HEK293T (cell line): ENCODE measurements at regions of chr2 and their contacts with region 1.

Region 1: DNA sequence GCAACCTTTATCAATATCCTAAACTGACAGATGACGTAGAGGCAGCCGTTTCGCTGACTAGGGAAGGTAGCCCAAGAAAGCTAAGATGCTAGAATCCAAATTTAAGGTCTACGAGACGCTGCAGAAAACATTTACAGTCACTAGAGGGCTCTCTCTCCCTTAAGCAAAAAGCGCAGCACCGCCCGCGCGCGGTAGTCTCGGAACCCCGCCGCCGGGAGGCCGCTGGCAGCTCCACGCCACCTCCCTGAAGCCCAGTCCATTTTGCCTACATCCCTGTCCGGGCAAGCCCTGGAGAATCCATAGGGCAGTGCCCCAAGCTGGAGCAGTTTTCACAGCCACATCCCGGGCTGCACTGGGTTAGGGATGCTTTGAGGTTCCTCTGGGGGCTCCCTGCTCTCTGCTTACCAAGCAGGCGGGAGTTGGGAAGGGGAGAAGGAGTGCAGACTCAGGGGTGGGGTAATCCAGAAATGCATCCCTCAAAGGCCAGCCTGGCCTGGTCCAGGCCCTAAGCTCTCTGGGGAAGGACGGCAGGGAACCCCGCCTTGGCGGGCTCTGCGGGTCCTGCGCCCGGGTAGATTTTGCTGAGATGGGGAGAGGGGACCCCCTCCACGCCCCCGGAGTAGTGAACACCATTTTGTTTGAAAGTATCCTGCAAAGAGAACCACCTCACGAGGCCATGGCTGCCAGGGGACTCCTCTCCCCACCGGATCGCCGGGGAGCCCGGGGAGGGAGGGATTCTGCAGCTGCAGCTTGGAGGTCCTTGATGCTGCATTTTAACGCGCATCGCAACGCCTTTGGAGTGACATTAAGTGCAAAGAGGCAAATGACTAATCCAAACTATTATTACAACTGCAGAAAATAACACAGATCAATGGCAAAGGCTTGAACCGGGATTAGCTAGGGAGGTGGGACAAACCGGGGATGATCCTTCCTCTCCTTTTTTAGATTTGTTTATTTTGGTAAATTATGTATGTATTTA is 1.3 kb upstream of the DPYSL5 start:
- DNase-seq: peak; percentile 80

Region 2: DNA sequence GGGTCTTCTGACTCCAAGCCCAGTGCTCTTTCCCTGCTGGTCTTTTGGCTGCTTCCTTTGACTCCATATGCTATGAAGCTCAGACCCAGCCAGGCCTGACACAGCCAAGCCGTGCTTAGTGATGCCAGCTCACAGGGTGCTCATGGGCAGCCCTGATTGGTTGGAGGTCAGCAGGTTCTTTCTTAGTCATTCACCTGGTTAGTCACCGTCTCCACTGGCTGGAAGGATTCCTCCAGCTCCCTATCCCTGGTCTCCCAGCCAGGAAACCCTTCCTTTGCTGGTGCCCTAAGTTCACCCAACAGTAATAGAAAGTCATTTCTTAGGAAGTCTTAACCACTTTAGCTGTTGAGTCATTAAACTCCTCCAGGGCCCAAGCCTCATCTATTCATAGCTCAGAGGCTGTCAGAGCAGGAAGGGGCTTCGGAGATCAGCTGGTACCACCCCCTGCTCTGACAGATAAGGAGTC is 150.2 kb before region 1 on chr2:
- CTCF ChIA-PET with region 1: no interaction called
- POLR2A ChIA-PET with region 1: no interaction called
- DNase-seq: no peak

Region 3: DNA sequence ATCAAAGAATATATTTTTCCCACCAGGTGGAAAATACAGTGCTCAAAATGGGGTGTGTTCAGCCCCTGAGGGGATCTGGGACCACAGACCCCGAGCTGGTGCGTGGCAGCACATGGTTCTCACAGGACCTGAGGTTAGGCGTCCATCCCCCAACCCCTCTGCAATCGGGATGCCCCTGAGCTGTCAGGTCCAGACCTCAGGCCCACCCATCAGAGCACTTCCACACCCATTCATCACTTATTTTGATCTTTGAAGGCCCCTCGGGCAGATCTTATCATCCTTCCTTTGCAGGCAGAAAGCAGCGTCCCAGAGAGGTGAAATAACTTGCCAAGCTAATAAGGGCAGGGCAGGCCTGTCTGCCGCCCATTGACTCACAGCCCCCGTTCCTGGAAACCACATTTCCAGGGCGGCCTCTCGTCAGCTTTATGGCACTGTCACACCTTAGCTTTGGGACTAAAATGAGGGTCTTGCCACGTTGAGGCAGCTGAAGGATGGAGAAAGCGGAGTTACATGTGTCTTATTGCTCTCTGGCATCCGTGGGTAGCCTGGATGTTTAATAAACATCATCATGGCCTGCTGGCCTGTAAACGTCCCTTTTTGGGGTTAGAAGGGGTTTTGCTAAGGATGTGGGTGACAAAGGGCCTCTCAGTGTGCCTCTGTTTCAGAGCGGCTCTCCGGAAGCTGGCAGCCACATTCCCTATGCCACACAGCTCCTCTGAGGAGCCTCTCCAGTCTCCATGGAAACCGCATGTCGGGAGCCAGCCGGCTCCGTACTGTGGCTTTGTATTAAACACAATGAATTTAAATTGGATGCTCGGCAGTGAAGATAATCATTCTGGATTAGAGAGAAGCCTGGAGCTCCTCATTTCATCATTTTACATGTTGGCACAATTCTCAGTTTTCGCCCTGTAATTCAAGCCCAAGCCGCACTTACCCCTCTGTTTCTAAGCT is 65.6 kb after region 1 on chr2:
- CTCF ChIA-PET with region 1: interaction called, 11 read pairs
- POLR2A ChIA-PET with region 1: no interaction called
- DNase-seq: no peak

Region 4: DNA sequence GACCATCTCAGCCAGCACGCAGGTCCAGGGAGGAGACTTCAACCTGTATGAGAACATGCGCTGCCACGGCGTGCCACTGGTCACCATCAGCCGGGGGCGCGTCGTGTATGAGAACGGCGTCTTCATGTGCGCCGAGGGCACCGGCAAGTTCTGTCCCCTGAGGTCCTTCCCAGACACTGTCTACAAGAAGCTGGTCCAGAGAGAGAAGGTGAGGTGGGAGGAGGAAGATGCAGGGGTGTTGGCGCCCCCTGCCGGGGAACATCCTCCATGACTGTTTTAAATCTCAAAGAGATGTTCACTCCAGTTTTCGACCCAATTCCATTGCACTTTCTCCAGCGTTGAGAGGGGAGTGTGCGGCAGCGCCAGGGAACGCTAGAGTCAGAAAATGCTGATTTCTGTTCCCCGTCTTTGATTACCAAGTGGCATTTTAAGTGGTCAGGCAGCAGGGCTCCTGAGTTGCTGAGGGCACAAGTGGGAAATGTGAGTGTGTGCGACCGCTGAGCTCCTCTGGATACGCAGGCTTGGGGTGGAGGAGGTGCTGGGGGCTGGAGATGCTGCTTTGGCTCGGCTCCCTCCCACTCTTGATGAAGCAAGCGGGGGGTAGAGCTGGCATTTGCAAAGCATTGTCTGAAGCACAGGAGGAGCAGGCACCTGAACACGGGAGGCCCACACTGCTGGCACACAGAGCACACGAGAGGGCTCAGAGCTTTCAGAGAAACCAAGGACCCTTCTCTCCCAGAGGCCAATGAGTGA is 96.1 kb after region 1 on chr2:
- CTCF ChIA-PET with region 1: interaction called, 49 read pairs
- POLR2A ChIA-PET with region 1: interaction called, 8 read pairs
- DNase-seq: peak; percentile 84